K562 (cell line): ENCODE measurements at regions of chr15 and their contacts with region 1.

Region 1: DNA sequence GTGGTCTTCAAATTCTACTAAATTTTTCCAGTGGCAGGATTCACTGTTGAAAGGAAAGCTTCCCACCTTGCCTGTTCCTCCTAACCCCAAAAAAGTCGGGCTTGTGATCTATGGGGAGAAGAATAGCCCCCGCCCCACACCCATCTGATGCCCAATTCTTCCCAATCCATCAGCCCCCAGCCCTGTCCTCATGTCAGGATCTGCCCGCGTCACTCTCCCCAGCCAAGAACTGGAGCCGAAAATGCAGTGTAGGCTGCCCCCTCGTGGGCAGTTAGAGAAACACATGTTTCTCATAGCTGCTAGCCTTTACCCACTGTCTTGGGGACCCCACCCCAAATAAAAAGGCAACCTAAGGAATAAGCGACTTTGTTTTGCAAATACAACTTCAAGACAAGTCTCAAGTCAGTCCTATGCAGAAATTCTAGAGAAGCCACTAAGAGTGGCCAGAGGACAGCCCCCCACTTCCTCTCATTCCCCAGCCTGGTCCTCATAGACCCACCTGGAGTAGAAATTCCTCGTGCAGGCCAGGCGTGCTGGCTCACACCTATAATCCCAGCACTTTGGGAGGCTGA is 13.0 kb upstream of the CSK start:
- DNase-seq: peak; percentile 72 to 80 (median 75)
- ATAC-seq: peak; percentile 75
- H3K4me3 ChIP-seq: no peak overlapping the region
- H3K27ac ChIP-seq: no peak overlapping the region
- H3K4me1 ChIP-seq: peaks cover 0 to 12% of the 10 kb centered on the region in 2 experiments; a peak in 1 of 5 replicates
- H3K27me3 ChIP-seq: peaks cover 4 to 27% of the 10 kb centered on the region in 2 experiments; a peak in 3 of 5 replicates
- CTCF ChIP-seq: peak; percentile 84 to 85 (median 84)
- EP300 ChIP-seq: no peak
- POLR2A ChIP-seq: no peak
- RAD21 ChIP-seq: peak; percentile 73 to 92

Region 2: DNA sequence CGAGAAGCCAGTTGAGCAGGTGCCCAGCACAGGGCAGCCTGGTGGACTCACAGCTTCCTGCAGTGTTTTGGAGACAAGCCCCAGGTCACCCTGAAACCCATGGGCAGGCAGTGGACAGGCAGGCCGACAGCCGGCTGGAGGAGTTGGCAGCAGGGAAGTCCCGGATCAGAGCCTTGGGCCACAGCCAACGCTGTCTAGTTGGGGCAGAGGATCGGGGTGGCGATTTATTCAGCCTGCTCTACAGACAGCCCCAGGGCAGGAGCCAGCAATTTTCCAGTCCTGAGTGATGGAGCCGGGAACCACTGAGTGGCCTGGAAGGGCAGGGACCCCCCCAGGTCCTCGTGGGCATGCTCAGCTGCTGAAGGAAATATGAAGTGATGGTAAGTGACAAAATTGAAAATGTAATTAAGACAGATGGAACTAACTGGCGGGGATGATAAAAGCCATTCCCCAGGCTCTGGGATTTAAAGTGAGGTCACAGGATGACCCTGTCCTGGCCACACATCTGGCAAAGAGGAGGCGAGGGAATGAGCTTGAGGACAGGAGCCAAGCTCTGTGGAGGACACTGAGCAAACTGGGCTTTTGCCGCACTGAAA is 929.9 kb before region 1 on chr15:
- CTCF ChIA-PET with region 1: no interaction called
- POLR2A ChIA-PET with region 1: no interaction called
- in situ Hi-C with region 1: no loop called
- intact Hi-C with region 1: no loop called
- DNase-seq: no peak
- ATAC-seq: no peak
- H3K4me3 ChIP-seq: no peak overlapping the region
- H3K27ac ChIP-seq: no peak overlapping the region
- H3K4me1 ChIP-seq: no peaks in the 10 kb centered on the region
- H3K27me3 ChIP-seq: peaks cover 9 to 55% of the 10 kb centered on the region in 2 experiments; a peak in 3 of 5 replicates
- CTCF ChIP-seq: no peak
- EP300 ChIP-seq: no peak
- POLR2A ChIP-seq: no peak
- RAD21 ChIP-seq: no peak

Region 3: GRCh38 chr15:74603026-74603788 is 165.7 kb before region 1 on chr15:
- CTCF ChIA-PET with region 1: no interaction called
- POLR2A ChIA-PET with region 1: no interaction called
- in situ Hi-C with region 1: no loop called
- intact Hi-C with region 1: no loop called
- DNase-seq: no peak
- ATAC-seq: no peak
- H3K4me3 ChIP-seq: no peak overlapping the region
- H3K27ac ChIP-seq: no peak overlapping the region
- H3K4me1 ChIP-seq: peaks cover 6 to 45% of the 10 kb centered on the region in 2 experiments; a peak in 4 of 5 replicates
- H3K27me3 ChIP-seq: peaks cover 0 to 3% of the 10 kb centered on the region in 2 experiments; a peak in 1 of 5 replicates
- CTCF ChIP-seq: no peak
- EP300 ChIP-seq: no peak
- POLR2A ChIP-seq: no peak
- RAD21 ChIP-seq: no peak

Region 4: GRCh38 chr15:74635228-74635627 is 133.6 kb before region 1 on chr15:
- CTCF ChIA-PET with region 1: interaction called, 51 read pairs
- POLR2A ChIA-PET with region 1: interaction called, 8 read pairs
- in situ Hi-C with region 1: loop called (anchors 5 kb)
- intact Hi-C with region 1: loop called (anchors 1 kb)
- DNase-seq: peak; percentile 75 to 83 (median 76)
- ATAC-seq: peak; percentile 89
- H3K4me3 ChIP-seq: no peak overlapping the region
- H3K27ac ChIP-seq: no peak overlapping the region
- H3K4me1 ChIP-seq: no peaks in the 10 kb centered on the region; a peak in 1 of 5 replicates
- H3K27me3 ChIP-seq: no peaks in the 10 kb centered on the region
- CTCF ChIP-seq: peak; percentile 88 to 91 (median 90)
- EP300 ChIP-seq: no peak
- POLR2A ChIP-seq: no peak
- RAD21 ChIP-seq: peak; percentile 82 to 97

Region 5: GRCh38 chr15:74799856-74800547 is 31.1 kb after region 1 on chr15:
- CTCF ChIA-PET with region 1: interaction called, 41 read pairs
- POLR2A ChIA-PET with region 1: interaction called, 4 read pairs
- in situ Hi-C with region 1: no loop called
- intact Hi-C with region 1: loop called (anchors 1 kb)
- DNase-seq: peak; percentile 84 to 95 (median 92)
- ATAC-seq: peak; percentile 99
- H3K4me3 ChIP-seq: no peak overlapping the region
- H3K27ac ChIP-seq: no peak overlapping the region
- H3K4me1 ChIP-seq: peaks cover 0 to 43% of the 10 kb centered on the region in 2 experiments; a peak in 3 of 5 replicates
- H3K27me3 ChIP-seq: no peaks in the 10 kb centered on the region
- CTCF ChIP-seq: peak; percentile 95 to 96 (median 96)
- EP300 ChIP-seq: no peak
- POLR2A ChIP-seq: no peak
- RAD21 ChIP-seq: peak; percentile 90 to 95